ENCODE measurements at regions of chr20 and their contacts with region 1.

Region 1: GRCh38 chr20:63009045-63009961 is 2.5 kb upstream of the BHLHE23 start:
- DNase-seq: no peak
- H3K4me3 ChIP-seq: no peak overlapping the region
- H3K27me3 ChIP-seq: peaks cover 62% of the 10 kb centered on the region
- CTCF ChIP-seq: peak; percentile 91

Region 2: DNA sequence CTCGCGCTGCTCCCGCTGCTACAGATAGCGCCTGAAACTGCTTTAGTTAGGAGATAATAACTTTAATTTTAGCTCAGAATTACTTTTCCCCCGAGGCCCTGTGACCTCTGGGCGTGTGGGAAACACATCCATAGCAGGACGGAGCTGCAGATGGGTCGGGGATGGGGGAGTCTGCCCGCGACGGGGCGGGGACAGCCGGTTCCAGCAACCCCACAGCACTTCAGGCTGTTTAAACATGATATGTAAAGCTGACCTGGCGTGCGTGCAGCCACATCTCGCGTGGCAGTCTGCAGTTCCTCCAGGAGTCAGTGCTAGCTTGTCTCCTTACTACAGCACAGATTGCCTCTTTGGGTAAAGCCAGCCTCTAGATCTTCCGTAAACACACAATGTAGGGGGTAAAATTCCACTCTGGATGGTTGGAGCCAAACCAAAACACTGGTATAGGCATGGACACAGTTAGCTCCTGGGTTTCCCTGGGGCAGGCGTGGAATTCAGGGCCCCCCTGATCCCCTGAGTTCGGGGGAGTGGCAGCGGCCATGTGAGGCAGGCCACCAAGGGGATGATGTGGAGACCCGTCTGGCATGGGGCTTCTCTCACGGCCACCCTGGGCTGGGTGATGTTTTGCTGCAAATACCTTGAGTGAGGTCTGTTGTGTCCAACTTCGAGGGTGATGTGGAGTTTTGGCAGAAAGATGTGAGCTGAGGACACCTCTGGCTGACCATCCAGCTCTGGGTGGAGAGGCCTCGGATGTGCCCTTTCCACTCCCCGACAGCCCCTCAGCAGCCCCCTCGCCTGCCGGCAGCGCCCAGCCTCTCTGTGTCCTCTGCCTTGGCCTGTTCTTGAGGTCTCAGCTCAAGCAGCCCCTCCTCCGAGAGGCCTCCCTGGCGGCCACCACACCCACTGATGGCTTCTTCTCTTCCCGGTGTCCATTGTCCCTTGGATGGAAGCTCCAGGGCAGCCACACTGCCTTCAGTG is 1158.1 kb before region 1 on chr20:
- CTCF ChIA-PET with region 1: no interaction called
- POLR2A ChIA-PET with region 1: no interaction called
- DNase-seq: no peak
- H3K4me3 ChIP-seq: no peak overlapping the region
- H3K27me3 ChIP-seq: no peaks in the 10 kb centered on the region
- CTCF ChIP-seq: no peak

Region 3: DNA sequence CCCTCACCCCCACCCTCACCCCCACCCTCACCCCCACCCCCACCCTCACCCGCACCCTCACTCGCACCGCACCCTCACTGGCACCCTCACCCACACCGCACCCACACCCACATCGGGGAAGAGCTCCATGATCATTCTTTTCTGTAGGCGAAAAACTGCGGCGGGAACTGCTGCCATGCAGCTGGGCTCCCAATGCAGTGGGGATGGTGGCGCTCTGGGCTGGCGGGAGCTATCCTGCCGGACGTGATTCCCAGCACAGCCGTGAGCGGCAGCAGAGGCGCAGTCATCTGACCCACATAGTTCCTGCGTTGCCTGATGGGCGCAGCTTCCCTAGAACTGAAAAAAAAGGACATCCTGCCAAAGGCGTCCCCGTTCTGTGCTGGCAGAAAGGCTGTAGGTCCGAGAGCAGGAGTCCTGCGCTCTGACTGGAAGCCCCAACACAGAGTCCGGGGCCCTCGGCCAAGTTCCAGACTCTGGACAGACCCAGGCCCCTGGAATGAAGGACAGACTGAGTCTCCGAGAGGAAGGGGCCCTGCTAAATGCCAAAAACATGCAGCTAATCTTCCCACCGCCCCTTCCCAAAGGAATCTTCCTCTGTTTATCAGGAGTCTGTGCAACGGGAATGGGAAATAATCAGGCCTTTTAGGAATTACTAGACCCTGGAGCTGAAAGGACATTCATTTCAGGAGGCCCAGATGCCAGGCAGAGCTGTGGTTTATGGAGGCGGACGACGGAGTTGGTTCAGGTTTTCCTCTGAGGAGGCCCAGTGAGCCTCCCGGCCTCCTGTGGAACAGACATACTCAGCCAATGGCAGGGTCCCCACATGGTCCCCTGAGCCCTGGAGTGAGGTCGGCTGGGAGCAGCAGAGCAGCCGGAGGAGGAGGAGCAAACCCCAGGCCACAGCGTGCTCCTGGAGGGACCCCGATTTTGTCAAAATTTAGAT is 133.6 kb before region 1 on chr20:
- CTCF ChIA-PET with region 1: interaction called, 18 read pairs
- POLR2A ChIA-PET with region 1: no interaction called
- DNase-seq: no peak
- H3K4me3 ChIP-seq: no peak overlapping the region
- H3K27me3 ChIP-seq: no peaks in the 10 kb centered on the region
- CTCF ChIP-seq: peak; percentile 58

Region 4: DNA sequence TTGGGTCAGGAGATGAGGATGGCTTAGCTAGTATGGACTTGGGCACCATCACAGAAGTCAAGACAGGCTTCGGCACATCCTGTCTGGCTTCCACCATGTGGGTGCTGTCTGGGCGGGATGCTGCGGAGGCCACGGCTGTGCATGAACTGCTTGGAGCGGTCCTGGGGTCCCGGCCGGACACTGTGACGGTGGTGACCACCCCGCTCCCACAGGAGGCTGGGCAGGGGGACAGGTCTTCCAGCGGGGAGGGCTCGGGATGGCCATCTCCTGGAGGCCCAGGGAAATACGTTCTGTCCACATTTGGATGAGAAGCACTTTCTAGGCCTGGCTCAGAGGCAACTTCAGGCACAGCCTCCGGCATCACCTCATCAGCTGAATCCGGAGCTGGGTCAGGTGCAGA is 115.6 kb before region 1 on chr20:
- CTCF ChIA-PET with region 1: interaction called, 10 read pairs
- POLR2A ChIA-PET with region 1: no interaction called
- DNase-seq: no peak
- H3K4me3 ChIP-seq: no peak overlapping the region
- H3K27me3 ChIP-seq: no peaks in the 10 kb centered on the region
- CTCF ChIP-seq: 0 out of 2 replicates have a peak, but pooled peaks have one; percentile 6

Region 5: DNA sequence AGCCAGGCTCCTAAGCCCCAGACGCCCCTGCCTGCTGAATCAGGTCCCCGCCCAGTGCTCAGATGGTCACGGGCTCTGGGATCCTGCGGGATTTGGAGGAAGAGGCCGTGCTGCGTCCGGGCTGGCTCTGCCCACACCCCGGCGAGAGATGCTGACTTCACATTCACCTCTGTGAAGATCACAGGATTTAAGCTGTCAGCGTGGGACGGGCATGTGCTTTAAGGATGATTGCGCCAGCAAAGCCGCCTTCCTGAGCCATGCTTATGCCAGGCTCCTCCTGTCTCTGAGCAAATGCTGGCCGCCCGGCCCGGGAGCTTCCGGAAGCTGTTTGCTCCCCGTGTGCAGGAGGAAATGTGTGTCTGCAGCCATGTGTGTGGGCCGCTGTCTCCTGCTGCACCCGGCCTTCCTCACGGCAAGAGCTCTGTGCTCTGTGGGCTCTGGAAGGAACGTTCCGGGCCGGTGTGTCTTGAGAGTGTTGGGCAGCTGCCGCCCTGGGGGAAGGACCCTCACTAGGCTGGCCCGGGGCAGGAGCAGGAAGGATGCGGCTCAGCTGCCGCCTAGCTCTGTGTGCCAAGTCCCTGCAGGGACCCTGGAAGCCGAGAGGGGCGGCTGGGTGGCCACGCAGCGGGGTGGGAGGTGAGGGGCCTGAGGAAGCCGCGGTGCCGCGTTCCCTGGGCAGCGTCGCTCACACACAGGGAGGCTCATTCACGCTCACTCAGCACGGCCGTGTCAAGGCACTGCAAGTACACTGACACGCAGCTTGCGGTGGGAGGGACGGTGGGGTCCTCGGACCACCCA is 16.4 kb after region 1 on chr20:
- CTCF ChIA-PET with region 1: interaction called, 13 read pairs
- POLR2A ChIA-PET with region 1: no interaction called
- DNase-seq: peak; percentile 12
- H3K4me3 ChIP-seq: no peak overlapping the region
- H3K27me3 ChIP-seq: peaks cover 66% of the 10 kb centered on the region
- CTCF ChIP-seq: no peak

Region 6: GRCh38 chr20:63230800-63231268 is 221.5 kb after region 1 on chr20:
- CTCF ChIA-PET with region 1: no interaction called
- POLR2A ChIA-PET with region 1: no interaction called
- DNase-seq: no peak
- H3K4me3 ChIP-seq: no peak overlapping the region
- H3K27me3 ChIP-seq: no peaks in the 10 kb centered on the region
- CTCF ChIP-seq: peak; percentile 87

Measured in BJ (cell line).